ENCODE measurements at regions of chr2 and their contacts with region 1.

Region 1: DNA sequence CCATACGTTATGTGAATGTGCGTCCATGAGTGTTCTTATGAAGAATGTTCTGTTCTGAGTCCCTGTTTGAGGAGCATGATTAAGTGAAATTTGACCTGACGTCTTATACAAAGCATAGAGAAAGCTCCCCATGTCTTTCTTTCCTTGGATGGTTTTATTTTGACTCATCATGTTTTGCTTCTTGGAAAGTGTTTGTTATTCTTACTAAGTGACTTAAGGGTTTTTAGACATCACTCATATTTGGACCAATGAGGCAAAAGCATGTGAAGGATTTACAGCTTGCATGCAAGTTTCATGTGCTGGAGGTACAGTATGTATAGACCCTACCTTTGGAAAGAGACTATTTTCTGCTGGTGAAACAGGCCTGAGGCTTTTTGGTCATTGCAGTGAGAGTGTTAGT is 33.5 kb upstream of the ZEB2 start:
- DNase-seq: no peak
- H3K4me3 ChIP-seq: no peak overlapping the region
- H3K27ac ChIP-seq: no peak overlapping the region
- H3K4me1 ChIP-seq: peaks cover 16% of the 10 kb centered on the region
- CTCF ChIP-seq: no peak

Region 2: DNA sequence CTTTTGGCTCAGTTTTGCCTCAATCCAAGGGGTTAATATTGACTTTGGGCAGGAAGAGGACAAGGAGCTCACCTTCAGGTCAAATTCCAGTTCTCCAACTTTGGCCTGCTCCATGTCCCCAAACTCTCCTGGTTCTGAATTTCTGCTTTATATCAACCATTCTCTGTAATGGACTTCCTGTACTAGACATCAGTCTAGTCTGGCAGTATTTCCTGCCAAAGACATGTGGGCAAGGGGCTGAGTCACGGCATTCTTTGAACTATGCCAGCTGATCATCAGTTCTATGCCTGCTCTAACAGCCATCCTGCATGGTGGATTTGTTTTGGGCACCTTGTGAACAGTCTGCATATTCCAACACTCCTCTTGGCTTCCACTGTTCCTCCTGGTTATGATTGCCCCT is 232.9 kb before region 1 on chr2:
- CTCF ChIA-PET with region 1: no interaction called
- POLR2A ChIA-PET with region 1: no interaction called
- intact Hi-C with region 1: no loop called
- DNase-seq: peak; percentile 49
- H3K4me3 ChIP-seq: no peak overlapping the region
- H3K27ac ChIP-seq: no peak overlapping the region
- H3K4me1 ChIP-seq: peaks cover 43% of the 10 kb centered on the region
- CTCF ChIP-seq: no peak

Region 3: DNA sequence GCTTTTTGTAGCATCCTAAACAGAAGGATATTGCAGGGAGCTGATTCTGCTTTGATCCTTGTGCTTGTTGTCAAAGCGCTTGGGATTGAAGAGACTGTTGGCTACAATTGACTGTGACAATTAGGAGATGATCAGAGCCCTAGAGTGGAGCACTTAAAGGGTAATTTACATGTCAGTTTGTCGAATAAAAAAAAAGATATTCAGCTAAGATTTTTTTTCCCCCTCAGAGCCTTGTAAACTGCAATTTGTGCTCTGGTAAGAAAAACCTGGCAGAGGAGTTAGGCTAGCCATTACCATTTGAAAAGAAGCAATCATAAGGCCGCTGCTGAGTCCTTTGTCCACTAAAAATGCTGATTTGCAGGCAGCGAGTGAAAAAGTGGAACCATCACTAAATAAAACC is 14.4 kb after region 1 on chr2:
- CTCF ChIA-PET with region 1: no interaction called
- POLR2A ChIA-PET with region 1: interaction called, 18 read pairs
- intact Hi-C with region 1: no loop called
- DNase-seq: no peak
- H3K4me3 ChIP-seq: no peak overlapping the region
- H3K27ac ChIP-seq: no peak overlapping the region
- H3K4me1 ChIP-seq: peaks cover 12% of the 10 kb centered on the region
- CTCF ChIP-seq: no peak

Region 4: GRCh38 chr2:144718376-144718775 is 165.0 kb after region 1 on chr2:
- CTCF ChIA-PET with region 1: no interaction called
- POLR2A ChIA-PET with region 1: no interaction called
- intact Hi-C with region 1: no loop called
- DNase-seq: peak; percentile 13
- H3K4me3 ChIP-seq: no peak overlapping the region
- H3K27ac ChIP-seq: no peak overlapping the region
- H3K4me1 ChIP-seq: no peaks in the 10 kb centered on the region
- CTCF ChIP-seq: no peak

Region 5: GRCh38 chr2:144770616-144771230 is 217.3 kb after region 1 on chr2:
- CTCF ChIA-PET with region 1: no interaction called
- POLR2A ChIA-PET with region 1: no interaction called
- intact Hi-C with region 1: no loop called
- DNase-seq: no peak
- H3K4me3 ChIP-seq: no peak overlapping the region
- H3K27ac ChIP-seq: no peak overlapping the region
- H3K4me1 ChIP-seq: peaks cover 9% of the 10 kb centered on the region
- CTCF ChIP-seq: no peak

Region 6: DNA sequence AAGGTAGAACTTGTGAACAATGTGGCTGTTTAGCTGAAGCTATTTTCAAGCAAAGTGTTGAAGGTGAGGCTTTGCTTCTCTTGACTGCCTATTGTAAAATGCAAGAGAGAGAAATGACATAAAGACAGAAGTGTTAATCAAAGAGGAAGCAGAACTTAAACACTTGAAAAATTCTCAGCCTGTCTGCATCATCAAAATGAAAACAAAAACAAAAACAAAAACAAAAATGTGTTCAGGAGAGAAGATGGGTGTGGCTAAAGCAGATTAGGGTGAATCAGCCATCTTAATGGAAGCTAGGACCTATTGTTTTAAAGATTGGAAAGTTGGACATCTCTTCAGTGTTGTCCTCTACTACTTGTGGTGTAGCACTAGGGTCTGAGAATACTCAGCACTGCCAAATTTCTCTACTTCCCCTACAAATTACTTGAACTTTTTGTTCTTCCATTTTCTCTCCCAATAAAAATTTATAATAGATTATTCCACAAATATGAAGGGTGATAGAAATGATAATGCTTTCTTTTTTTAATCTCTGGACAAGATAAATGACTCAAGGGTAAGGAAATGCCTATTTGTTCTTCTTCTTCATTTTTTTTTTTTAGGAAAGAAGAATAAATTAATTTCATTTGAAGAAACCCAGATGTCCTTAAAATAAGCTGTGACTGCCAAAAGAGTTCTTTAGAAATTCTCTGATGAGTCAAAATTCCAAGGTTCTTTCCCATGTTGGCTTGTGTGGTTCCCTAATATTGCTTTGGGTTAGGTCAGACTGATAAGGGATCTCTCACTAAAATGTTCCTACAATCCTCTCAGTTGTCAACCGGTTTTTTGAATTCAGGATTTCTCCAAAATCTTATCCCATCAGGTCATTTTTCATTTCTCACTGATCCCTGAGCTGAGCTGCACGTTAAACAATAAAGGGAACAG is 537.7 kb after region 1 on chr2:
- CTCF ChIA-PET with region 1: no interaction called
- POLR2A ChIA-PET with region 1: no interaction called
- intact Hi-C with region 1: no loop called
- DNase-seq: no peak
- H3K4me3 ChIP-seq: no peak overlapping the region
- H3K27ac ChIP-seq: no peak overlapping the region
- H3K4me1 ChIP-seq: no peaks in the 10 kb centered on the region
- CTCF ChIP-seq: no peak

Measured in OCI-LY7 (cell line).